ENCODE measurements at regions of chr5 and their contacts with region 1.

Region 1: GRCh38 chr5:101663554-101663953 is 632.5 kb downstream of the SLCO4C1 start:
- DNase-seq: no peak
- CTCF ChIP-seq: no peak

Region 2: GRCh38 chr5:101678481-101679193 is 15.1 kb after region 1 on chr5:
- CTCF ChIA-PET with region 1: interaction called, 21 read pairs
- POLR2A ChIA-PET with region 1: no interaction called
- DNase-seq: peak; percentile 15
- CTCF ChIP-seq: peak; percentile 83

Region 3: GRCh38 chr5:101689306-101689705 is 25.8 kb after region 1 on chr5:
- CTCF ChIA-PET with region 1: no interaction called
- POLR2A ChIA-PET with region 1: no interaction called
- DNase-seq: no peak
- CTCF ChIP-seq: no peak

Measured in GM10248 (cell line).